Right lobe of liver (tissue), 6 donors: ENCODE measurements at regions of chr12 and their contacts with region 1.

Region 1: DNA sequence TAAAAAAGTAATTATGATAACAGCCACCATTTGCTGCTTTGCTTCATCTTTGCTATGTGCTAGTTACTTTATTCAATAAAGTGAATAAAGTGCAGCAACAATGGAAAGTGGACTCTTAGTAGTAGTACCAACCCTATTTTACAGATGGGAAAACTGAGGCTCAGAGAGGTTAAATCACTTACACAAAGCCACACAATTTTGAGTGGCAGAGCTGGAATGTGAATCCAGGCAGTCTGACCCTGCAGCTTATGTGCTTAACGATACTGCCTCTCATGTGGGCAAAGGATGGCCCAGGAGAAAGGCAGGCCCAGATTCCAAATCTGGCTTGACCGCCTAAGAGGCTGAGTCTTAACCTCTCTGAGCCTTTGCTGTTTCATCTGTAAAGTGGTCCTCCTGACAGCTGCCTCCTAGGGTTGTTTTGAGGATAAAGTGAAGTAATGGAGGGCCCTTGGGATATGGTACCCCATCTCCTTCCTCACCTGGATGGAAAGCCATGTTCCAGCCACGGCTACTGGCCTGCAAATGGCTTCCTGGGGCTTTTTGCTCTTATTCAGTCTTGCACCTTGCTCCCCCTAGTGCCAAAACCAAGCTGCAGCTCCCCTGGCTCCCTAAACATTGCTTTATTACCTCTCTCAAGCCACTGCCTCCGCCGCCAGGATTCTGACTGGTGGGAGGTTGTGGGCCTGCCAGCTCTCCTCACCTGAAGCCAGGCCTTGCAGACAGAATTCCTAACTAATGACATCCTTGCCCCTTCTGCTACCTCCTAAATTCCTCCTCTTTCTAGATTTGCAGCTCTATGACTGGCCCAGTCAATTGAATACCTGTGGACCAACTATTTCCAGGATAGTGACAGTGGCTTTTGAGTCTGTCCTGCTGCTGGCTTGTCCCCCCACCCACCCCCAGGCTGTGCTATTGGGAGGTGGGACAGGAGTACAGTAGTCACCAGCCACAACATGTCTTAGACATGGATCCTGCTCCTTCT is 283.3 kb upstream of the PWP1 start:
- DNase-seq: peak; percentile 56 to 73 (median 63)
- ATAC-seq: peak; percentile 81 to 88 (median 87)
- H3K4me3 ChIP-seq: no peak overlapping the region
- H3K27ac ChIP-seq: no peak overlapping the region
- H3K4me1 ChIP-seq: no peaks in the 10 kb centered on the region
- H3K27me3 ChIP-seq: no peaks in the 10 kb centered on the region
- CTCF ChIP-seq: peak; percentile 62 to 75 (median 66)
- POLR2A ChIP-seq: no peak

Region 2: DNA sequence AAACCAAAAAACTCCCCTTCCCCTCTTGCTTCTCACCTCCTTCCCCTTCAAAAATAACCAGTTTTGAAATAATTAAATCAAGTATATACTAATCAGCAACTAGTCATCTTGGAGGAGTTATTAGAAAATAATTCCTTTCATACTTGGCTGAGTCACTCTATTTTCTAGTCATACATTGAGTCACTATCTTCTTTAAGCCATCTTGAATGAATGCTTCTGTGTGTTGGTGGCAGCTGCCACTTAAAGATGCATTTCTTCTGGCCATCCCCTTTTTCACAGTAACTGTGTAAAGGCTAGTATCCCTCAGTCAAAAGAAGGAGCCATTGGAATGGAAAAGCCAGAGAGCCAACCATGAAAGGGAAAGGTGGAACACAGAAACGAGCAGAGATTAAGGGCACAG is 530.8 kb before region 1 on chr12:
- intact Hi-C with region 1: no loop called
- DNase-seq: no peak
- ATAC-seq: no peak
- H3K4me3 ChIP-seq: no peak overlapping the region
- H3K27ac ChIP-seq: no peak overlapping the region
- H3K4me1 ChIP-seq: no peaks in the 10 kb centered on the region
- H3K27me3 ChIP-seq: no peaks in the 10 kb centered on the region
- CTCF ChIP-seq: no peak
- POLR2A ChIP-seq: no peak

Region 3: DNA sequence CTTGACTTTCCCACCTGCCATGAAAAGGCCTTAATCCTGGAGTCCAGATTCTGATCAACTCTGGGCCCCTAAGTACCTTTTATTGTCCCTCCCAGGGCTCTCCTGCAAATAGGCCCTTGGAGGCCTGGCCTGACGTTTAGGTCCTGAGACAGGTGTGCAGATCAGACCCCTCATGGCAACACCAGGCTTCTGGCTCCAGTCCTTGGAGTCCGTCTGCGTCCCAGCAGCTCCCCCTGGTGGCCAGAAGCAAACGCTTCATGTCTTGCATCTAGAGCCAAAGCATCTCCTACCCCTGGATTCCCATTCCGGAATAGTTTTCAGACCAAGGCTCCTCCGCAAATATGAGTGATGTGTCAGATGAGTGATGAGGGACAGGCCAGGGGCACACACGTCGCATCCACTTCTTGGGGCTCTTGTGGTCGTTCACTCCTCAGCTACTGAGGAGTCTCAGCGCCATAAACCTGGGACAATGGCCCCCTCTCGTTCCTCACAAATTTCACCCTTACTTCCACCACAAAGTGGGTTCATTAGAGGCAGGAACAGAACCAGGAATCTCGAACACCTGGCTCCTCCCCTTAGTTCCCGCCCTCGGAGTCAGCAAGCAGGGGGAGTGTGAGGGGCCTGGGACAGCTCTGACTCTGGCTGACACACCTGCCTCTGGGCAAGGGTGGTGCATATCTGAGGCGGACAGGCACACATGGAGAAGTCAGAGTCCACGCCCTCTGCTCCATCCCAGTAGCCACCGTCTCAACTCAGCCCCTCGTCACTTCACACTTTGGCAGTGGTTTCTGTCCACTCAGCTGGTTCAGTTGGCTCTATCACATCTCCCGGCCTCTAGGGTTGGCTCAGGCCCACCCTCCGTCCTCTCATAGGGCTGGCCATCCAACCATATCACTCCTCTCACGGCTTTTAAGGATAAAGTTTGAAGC is 205.4 kb after region 1 on chr12:
- intact Hi-C with region 1: loop called in 1 of 2 experiments (anchors 10 kb)
- DNase-seq: peak; percentile 83 to 85 (median 84)
- ATAC-seq: peak; percentile 84 to 94 (median 89)
- H3K4me3 ChIP-seq: no peak overlapping the region
- H3K27ac ChIP-seq: no peak overlapping the region
- H3K4me1 ChIP-seq: no peaks in the 10 kb centered on the region
- H3K27me3 ChIP-seq: no peaks in the 10 kb centered on the region
- CTCF ChIP-seq: peak; percentile 87 to 95 (median 92)
- POLR2A ChIP-seq: no peak